ENCODE measurements at regions of chr12 and their contacts with region 1.

Region 1: GRCh38 chr12:54324617-54325441 is at the start of gene COPZ1:
- DNase-seq: peak; percentile 100
- H3K4me3 ChIP-seq: peak within 1 kb of the TSS; percentile 38 to 85 (median 67)
- H3K27ac ChIP-seq: peak within 1 kb of the TSS; percentile 73
- H3K4me1 ChIP-seq: peaks cover 20% of the 10 kb centered on the region
- H3K27me3 ChIP-seq: no peaks in the 10 kb centered on the region
- CTCF ChIP-seq: peak; percentile 72 to 80
- POLR2A ChIP-seq: peak; percentile 91
- total RNA-seq, gene COPZ1: 137 and 143 TPM in 2 replicates

Region 2: DNA sequence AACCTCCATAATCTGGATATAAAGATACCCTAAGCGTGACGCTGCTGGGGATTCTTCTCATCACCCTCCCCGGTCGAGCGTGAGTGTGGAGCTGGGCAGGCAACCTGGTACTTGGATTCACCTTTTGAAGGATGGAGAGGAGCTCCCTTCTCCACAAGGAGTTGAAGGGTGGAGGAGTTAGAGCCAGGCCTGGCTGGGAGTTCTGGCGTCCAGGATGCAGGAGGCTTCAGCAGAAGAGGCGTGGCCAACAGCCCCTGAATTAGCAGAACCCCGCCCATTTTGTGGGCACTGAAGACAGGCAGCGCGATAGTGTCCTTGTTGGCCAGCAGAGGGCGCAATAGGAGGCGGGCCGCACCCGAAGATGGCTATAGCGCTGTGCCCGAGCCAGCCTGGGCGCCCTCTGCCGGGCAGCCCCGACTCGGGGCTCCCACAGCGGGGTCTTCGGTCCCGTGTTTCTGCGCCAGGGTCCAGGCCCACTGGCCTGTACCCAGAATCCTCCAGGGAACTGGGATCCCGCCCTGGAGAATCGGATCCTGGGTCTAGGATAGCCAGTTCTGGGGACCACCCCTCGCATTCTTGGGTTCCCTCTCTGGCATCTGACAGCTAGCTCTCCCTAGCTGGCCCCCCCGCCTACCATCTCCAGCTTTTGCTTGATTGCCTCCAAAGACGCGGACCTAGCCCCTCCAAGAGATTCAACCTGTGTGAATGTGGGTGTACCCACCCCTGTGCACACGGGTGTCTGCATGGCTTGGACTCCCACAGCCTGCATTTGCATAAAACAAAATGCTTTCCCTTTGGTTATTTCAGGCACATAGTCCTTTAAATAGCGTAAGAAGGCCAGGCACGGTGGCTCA is 110.0 kb before region 1 on chr12:
- CTCF ChIA-PET with region 1: interaction called, 10 read pairs
- POLR2A ChIA-PET with region 1: no interaction called
- dilution Hi-C with region 1: no loop called
- intact Hi-C with region 1: no loop called
- DNase-seq: peak; percentile 92
- H3K4me3 ChIP-seq: peak overlapping the region in 1 of 3 experiments; percentile 17
- H3K27ac ChIP-seq: no peak overlapping the region
- H3K4me1 ChIP-seq: peaks cover 14% of the 10 kb centered on the region
- H3K27me3 ChIP-seq: peaks cover 7 to 16% of the 10 kb centered on the region in 2 experiments
- CTCF ChIP-seq: peak; percentile 100
- POLR2A ChIP-seq: no peak

Region 3: DNA sequence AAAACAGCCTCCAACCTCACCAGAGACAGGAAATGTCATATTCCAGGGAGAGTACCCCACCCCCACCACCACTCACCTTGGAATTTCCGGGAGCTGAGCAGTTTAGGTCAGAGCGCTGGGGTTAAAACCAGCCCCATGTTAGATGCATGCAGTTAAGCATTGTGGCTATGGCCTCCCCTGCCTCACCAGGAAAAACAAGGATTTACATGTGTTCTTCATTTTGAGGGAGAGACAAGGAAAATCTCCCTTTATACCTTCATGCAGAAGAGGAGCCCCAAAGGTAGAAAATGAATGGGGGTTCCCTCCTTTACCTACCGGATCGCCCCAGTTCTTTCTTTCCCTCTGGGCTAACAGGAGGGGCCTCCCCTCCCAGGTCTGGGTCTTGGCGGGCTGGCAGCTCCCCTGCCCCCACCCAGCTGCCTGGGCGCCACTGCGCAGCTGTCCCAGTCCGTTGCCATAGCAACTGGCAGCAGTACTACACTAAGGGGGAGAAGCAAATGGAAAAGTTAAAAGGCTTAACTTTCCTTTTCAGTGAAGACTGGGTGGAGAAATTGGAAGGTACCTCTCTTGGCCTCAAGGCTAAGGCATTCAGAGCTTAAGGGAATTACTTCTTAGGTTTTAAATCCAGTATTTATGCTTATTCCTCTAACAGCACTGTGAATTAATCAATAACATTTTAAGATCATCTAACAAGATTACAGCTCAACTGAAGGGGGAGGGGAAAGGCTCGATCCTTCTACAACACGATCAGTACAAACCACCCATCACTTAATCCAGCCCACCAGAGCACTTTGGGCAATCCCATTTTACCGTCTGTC is 65.4 kb before region 1 on chr12:
- CTCF ChIA-PET with region 1: interaction called, 8 read pairs
- POLR2A ChIA-PET with region 1: no interaction called
- dilution Hi-C with region 1: no loop called
- intact Hi-C with region 1: loop called (anchors 2 kb)
- DNase-seq: peak; percentile 90
- H3K4me3 ChIP-seq: peak overlapping the region; percentile 10 to 76 (median 31)
- H3K27ac ChIP-seq: peak overlapping the region; percentile 74
- H3K4me1 ChIP-seq: peaks cover 40% of the 10 kb centered on the region
- H3K27me3 ChIP-seq: no peaks in the 10 kb centered on the region
- CTCF ChIP-seq: no peak
- POLR2A ChIP-seq: peak; percentile 49

Region 4: DNA sequence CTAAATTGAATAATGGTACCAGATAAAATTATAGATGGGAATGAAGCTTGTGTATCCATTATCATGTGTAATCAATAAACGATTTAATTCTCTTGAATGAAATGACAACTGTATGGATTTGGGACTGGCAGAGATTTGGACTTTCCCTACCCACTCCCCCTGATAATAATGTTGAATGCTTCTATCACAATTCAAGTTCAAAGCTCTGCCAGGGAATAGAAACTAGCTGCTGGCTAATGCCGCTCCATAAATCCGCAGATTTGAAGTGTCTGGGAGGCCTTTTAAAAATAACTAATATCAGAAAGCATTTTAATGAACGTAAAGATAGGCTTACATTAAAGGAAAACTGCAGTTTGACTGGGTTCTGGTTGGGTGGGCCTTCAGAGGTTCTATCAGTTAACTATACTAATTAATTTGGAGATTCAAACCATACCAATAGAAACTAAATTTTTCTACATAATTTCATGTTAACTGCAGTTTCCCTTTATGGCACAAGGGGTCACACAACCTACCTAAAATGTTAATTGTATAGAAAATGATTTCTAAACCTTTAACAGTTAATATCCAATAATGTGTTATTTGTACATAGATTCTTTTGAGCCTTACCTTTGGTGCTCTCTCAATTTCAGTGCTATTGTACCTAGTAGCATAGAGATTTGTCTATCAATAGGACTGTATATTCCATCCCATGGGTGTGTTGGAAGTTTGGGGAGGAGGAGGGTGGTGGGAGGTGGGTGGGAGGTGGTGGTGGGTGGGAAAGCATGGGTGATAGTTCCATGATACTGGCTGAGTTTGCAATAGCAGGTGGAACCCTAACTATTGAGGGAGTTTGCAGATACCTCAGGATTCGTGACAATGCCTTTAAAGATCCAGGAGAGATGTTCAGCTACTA is 39.4 kb before region 1 on chr12:
- CTCF ChIA-PET with region 1: interaction called, 20 read pairs
- POLR2A ChIA-PET with region 1: interaction called, 15 read pairs
- dilution Hi-C with region 1: no loop called
- intact Hi-C with region 1: loop called (anchors 1 kb)
- DNase-seq: no peak
- H3K4me3 ChIP-seq: peak overlapping the region in 1 of 3 experiments; percentile 19
- H3K27ac ChIP-seq: no peak overlapping the region
- H3K4me1 ChIP-seq: peaks cover 31% of the 10 kb centered on the region
- H3K27me3 ChIP-seq: no peaks in the 10 kb centered on the region
- CTCF ChIP-seq: peak; percentile 3 to 11
- POLR2A ChIP-seq: no peak

Region 5: DNA sequence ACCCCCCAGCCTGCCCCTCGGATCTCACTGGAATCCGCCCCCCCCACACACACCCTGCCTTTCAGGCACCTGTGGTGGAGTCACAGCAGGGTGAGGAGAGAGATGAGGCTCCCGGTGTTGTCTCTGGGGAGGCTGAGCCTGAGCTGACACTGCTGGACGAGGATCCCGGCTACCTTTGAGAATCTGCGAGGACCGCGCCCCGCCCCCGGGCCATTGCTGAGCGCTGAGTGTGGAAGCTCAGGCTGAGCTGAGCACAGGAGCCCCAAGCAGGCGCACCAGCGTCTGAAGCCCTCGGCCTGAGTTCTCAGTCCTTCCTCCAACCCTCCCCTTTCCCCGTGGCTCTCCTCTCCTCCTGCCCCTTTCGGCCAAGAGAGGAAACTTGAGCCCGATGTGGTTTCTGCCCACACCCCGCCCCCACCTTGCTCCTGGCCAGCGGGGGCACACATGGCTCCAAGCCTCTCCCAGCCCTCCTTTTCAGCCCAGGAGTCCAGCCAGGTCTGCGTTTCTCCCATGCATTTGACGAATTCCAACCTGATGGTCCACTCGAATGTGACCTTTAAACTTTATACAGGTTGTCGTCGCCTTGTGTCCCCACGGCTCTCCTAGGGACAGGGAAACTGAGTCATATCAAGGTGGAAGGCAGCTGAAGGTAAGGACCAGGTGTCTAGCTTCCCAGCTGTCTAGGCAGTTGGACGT is 23.9 kb before region 1 on chr12 and contains the start of gene NFE2:
- CTCF ChIA-PET with region 1: interaction called, 18 read pairs
- POLR2A ChIA-PET with region 1: interaction called, 3 read pairs
- dilution Hi-C with region 1: no loop called
- intact Hi-C with region 1: no loop called
- DNase-seq: no peak
- H3K4me3 ChIP-seq: no peak within 1 kb of the TSS
- H3K27ac ChIP-seq: no peak within 1 kb of the TSS
- H3K4me1 ChIP-seq: no peaks in the 10 kb centered on the region
- H3K27me3 ChIP-seq: peaks cover 38 to 54% of the 10 kb centered on the region in 2 experiments
- CTCF ChIP-seq: peak in 1 of 2 donors; percentile 1
- POLR2A ChIP-seq: no peak
- total RNA-seq, gene NFE2: not detected in 2 replicates

Region 6: GRCh38 chr12:54359033-54359761 is 34.4 kb after region 1 on chr12:
- CTCF ChIA-PET with region 1: interaction called, 24 read pairs
- POLR2A ChIA-PET with region 1: interaction called, 7 read pairs
- dilution Hi-C with region 1: no loop called
- intact Hi-C with region 1: loop called (anchors 1 kb)
- DNase-seq: peak; percentile 99
- H3K4me3 ChIP-seq: peak overlapping the region; percentile 27 to 69 (median 69)
- H3K27ac ChIP-seq: peak overlapping the region; percentile 82
- H3K4me1 ChIP-seq: peaks cover 27% of the 10 kb centered on the region
- H3K27me3 ChIP-seq: no peaks in the 10 kb centered on the region
- CTCF ChIP-seq: no peak
- POLR2A ChIP-seq: peak; percentile 78

Measured in endothelial cell of umbilical vein (primary cell).